ENCODE measurements at regions of chr12 and their contacts with region 1.

Region 1: GRCh38 chr12:76763743-76764675 is at the start of gene ZDHHC17:
- H3K4me3 ChIP-seq: peak within 1 kb of the TSS; percentile 74
- H3K27ac ChIP-seq: peak within 1 kb of the TSS; percentile 94
- H3K4me1 ChIP-seq: peaks cover 7% of the 10 kb centered on the region; the same call in 1 of the 2 replicates
- CTCF ChIP-seq: no peak; the same call in 1 of the 2 replicates

Region 2: DNA sequence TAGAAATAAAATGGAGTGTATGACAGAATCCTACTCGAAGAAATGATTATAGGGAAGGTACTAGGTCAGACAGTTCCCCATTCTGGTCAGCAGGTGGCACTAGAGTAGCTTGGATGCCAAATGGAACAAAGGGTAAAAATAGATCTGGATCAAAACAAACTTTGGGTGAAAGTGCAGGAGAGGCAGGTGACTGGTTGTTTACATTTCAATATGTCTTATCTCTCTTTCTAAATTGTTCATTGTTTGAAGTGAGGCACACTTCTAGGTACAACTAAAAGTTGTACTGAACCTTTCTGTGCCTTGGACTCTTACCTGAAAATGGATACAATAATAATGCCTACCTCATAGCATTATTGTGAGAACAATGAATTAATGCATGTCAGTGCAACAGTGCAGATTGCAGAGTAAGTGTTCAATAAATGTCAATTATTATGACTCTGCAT is 142.4 kb before region 1 on chr12:
- CTCF ChIA-PET with region 1: interaction called, 10 read pairs
- POLR2A ChIA-PET with region 1: no interaction called
- H3K4me3 ChIP-seq: no peak overlapping the region
- H3K27ac ChIP-seq: no peak overlapping the region
- H3K4me1 ChIP-seq: no peaks in the 10 kb centered on the region
- CTCF ChIP-seq: peak; percentile 80

Region 3: DNA sequence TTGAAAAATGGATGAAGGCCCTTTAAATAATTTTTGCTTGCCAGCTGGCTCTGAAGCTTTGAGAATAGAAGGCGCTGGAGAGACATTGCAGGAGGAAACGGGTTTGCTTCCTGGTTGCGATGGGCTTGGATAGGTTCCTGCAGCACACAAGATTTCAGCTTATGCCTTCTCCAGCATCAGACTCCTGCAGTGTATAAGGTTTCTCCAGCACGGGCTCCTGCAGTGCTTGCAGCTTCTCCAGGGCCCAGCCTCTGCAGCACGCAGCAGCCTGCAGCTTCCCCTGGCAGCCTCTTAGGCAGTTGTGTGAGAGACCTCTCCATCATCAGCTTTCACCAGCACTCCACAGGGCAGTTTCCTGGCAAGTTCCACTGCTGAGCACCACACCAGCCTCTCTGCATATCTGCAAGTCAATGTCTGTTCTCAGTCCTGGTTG is 78.7 kb before region 1 on chr12:
- CTCF ChIA-PET with region 1: interaction called, 4 read pairs
- POLR2A ChIA-PET with region 1: interaction called, 12 read pairs
- H3K4me3 ChIP-seq: no peak overlapping the region
- H3K27ac ChIP-seq: no peak overlapping the region
- H3K4me1 ChIP-seq: peaks cover 10% of the 10 kb centered on the region
- CTCF ChIP-seq: no peak

Region 4: GRCh38 chr12:76720068-76720467 is 43.9 kb before region 1 on chr12:
- CTCF ChIA-PET with region 1: interaction called, 4 read pairs
- POLR2A ChIA-PET with region 1: interaction called, 12 read pairs
- H3K4me3 ChIP-seq: no peak overlapping the region
- H3K27ac ChIP-seq: no peak overlapping the region
- H3K4me1 ChIP-seq: no peaks in the 10 kb centered on the region
- CTCF ChIP-seq: no peak

Measured in HEK293 (cell line).